K562 (cell line): ENCODE measurements at regions of chr3 and their contacts with region 1.

Region 1: DNA sequence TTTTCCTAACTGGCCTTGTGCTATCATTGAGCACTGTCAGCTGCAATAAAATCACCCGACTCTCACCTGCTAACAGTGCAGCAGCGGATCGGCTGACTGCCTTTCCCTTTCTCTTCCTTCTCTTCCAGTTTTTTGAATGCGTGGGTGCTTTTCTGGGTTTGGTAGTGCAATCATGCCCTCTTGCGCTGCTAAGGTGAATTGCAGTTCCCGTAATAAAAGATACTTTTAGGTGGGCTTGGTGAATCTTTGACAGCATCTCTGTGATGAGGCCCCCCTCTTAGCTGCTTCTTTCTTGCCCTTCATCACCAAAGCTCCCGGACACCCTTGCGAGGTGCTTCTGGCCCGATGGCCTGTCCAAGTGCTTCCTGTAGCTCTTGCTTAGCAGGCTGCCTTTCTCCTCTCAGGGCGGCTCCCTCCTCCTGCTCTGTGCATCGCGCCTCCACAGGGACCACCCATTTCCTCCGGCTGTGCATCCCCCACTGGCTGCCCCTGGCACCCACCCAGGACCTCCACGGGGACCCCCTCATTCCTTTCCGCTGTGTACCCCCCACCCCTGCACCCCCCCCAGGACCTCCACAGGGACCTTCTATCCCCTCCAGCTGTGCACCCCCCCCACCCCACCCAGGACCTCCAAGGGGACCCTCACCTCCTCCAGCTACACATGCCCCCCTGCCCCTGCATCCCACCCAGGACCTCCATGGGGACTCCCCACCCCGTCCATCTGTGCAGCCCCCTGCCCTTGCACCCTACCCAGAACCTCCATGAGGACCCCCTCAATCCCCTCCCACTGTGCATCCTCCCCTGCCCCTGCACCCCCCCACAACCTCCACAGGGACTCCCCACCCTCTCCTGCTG is 50.8 kb upstream of the RPL32 start:
- DNase-seq: peak; percentile 70 to 81 (median 73)
- ATAC-seq: peak; percentile 60
- H3K4me3 ChIP-seq: no peak overlapping the region
- H3K27ac ChIP-seq: no peak overlapping the region
- H3K4me1 ChIP-seq: peaks cover 9 to 20% of the 10 kb centered on the region in 2 experiments; a peak in 3 of 5 replicates
- H3K27me3 ChIP-seq: no peaks in the 10 kb centered on the region
- CTCF ChIP-seq: peak; percentile 94 to 98 (median 98)
- EP300 ChIP-seq: no peak
- POLR2A ChIP-seq: no peak
- RAD21 ChIP-seq: peak; percentile 98 to 99

Region 2: DNA sequence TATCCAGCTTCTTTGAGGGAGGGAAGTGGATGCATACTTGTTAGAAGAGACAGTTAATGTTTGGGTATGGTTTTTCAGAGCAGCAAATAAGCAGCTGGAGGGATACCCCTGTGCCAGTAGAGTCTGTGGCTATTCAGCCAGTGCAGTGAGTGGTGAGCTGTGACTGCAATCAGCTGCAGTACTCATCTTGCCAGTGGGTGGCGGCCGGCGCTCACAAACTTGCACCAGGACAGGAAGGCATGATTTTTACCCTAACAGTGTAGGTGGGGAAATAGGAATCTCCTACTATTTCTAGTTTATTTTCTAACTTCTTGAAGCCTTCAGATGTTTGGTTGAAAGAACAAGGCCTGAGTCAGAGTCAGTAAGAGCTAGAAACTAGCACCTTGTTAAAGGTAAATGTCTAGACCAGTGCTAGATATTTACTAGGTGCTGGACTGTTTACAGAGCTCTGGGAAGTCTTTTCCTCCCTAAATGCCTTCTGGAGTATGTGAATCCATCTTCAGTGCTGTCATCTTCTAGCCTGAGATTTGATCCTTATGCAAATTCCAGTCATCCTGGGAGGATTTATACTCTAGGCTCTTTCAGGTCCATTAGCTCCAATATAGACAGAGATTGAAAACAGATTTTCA is 757.1 kb before region 1 on chr3:
- CTCF ChIA-PET with region 1: interaction called, 8 read pairs
- POLR2A ChIA-PET with region 1: no interaction called
- in situ Hi-C with region 1: loop called (anchors 25 kb)
- intact Hi-C with region 1: loop called (anchors 1 kb)
- DNase-seq: peak; percentile 57 to 63 (median 60)
- ATAC-seq: peak; percentile 97
- H3K4me3 ChIP-seq: no peak overlapping the region
- H3K27ac ChIP-seq: no peak overlapping the region
- H3K4me1 ChIP-seq: no peaks in the 10 kb centered on the region
- H3K27me3 ChIP-seq: no peaks in the 10 kb centered on the region
- CTCF ChIP-seq: peak; percentile 84 to 90 (median 88)
- EP300 ChIP-seq: no peak
- POLR2A ChIP-seq: no peak
- RAD21 ChIP-seq: peak; percentile 88 to 95

Region 3: DNA sequence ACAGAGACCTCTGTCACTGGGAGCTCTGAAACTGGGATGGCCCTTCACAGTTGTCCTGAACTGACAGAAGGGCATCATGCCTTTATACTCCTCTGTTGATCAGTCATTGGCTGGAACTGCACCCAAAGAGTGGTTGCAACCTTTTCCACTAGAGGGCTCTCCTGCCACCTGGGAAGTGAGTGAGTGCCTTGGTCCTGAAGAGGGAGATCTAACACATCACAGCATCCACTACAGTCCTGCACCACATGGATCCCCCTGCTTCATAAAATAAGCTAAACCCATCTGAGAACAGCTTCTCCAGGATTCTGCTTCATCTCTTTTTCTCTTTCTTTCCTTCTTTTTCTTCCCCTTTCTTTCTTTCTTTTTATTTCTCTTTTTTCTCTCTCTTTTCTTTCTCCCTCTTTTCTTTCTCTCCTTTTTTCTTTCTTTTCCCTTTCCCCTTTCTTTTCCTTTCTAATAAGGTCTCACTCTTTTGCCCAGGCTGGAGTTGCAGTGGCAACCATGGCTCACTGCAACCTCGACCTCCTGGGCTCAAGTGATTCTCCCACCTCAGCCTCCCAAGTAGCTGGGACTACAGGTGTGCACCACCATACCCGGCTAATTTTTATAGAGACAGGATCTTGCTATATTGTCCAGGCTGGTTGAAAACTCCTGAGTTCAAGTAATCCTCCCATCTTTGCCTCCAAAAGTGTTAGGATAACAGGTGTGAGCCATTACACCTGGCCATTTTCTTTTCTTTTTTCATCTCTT is 185.5 kb before region 1 on chr3:
- CTCF ChIA-PET with region 1: interaction called, 12 read pairs
- POLR2A ChIA-PET with region 1: no interaction called
- in situ Hi-C with region 1: loop called (anchors 5 kb)
- intact Hi-C with region 1: loop called (anchors 1 kb)
- DNase-seq: peak; percentile 73 to 87 (median 80)
- ATAC-seq: peak; percentile 99
- H3K4me3 ChIP-seq: no peak overlapping the region
- H3K27ac ChIP-seq: no peak overlapping the region
- H3K4me1 ChIP-seq: no peaks in the 10 kb centered on the region
- H3K27me3 ChIP-seq: peaks cover 14 to 33% of the 10 kb centered on the region in 2 experiments
- CTCF ChIP-seq: peak; percentile 95 to 99 (median 99)
- EP300 ChIP-seq: no peak
- POLR2A ChIP-seq: no peak
- RAD21 ChIP-seq: peak; percentile 73 to 95

Region 4: GRCh38 chr3:12822725-12823373 is 69.4 kb before region 1 on chr3:
- CTCF ChIA-PET with region 1: interaction called, 4 read pairs
- POLR2A ChIA-PET with region 1: no interaction called
- in situ Hi-C with region 1: no loop called
- intact Hi-C with region 1: loop called (anchors 1 kb)
- DNase-seq: peak in 3 of 4 experiments; percentile 49 to 64 (median 49)
- ATAC-seq: peak; percentile 83
- H3K4me3 ChIP-seq: no peak overlapping the region
- H3K27ac ChIP-seq: no peak overlapping the region; the same call in 2 of the 3 replicates
- H3K4me1 ChIP-seq: peaks cover 0 to 2% of the 10 kb centered on the region in 2 experiments; a peak in 1 of 5 replicates
- H3K27me3 ChIP-seq: no peaks in the 10 kb centered on the region
- CTCF ChIP-seq: peak; percentile 52 to 74 (median 57); a peak in 4 of 6 replicates
- EP300 ChIP-seq: no peak
- POLR2A ChIP-seq: no peak
- RAD21 ChIP-seq: peak in 1 of 2 experiments; percentile 44; a peak in 3 of 4 replicates

Region 5: GRCh38 chr3:12868039-12869034 is 23.9 kb before region 1 on chr3:
- CTCF ChIA-PET with region 1: interaction called, 42 read pairs
- POLR2A ChIA-PET with region 1: interaction called, 5 read pairs
- in situ Hi-C with region 1: no loop called
- intact Hi-C with region 1: loop called (anchors 1 kb)
- DNase-seq: peak; percentile 85 to 97 (median 86)
- ATAC-seq: peak; percentile 89
- H3K4me3 ChIP-seq: peak overlapping the region; percentile 47
- H3K27ac ChIP-seq: peak overlapping the region; percentile 79
- H3K4me1 ChIP-seq: peaks cover 8 to 22% of the 10 kb centered on the region in 2 experiments
- H3K27me3 ChIP-seq: no peaks in the 10 kb centered on the region
- CTCF ChIP-seq: peak; percentile 92 to 98 (median 96)
- EP300 ChIP-seq: peak; percentile 45
- POLR2A ChIP-seq: peak; percentile 69
- RAD21 ChIP-seq: peak; percentile 98 to 99

Region 6: DNA sequence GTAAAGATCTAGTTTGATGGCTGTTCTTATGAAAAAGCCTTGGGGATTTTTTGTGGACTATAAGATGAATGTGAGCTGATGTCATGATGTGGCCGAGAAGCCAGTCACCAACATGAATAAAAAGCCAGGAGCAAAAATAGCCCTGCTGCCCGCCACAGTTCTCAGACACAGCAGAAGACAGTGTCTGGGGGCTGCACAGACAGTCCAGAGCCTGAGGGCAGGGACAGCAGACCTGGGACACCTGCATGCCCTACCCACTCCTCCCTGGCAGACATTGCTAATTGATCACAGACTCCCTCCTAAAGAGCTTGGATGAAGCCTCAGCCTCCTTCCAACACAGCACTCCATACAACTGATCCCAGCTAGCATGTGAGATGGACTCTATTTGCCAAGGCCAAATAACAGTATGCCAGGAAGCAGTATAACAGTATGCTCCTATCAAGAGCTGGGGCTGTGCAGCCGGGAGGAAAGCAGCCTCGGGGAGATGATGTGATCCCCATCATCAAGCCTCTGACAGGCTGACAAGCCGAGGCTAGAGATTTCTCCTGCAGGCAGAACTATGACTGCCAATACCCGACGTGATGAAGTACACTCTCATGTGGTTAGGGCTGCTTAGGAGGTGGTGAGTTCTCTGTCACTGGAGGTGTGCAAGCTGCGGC is 54.6 kb after region 1 on chr3:
- CTCF ChIA-PET with region 1: no interaction called
- POLR2A ChIA-PET with region 1: no interaction called
- in situ Hi-C with region 1: no loop called
- intact Hi-C with region 1: no loop called
- DNase-seq: peak in 1 of 4 experiments; percentile 47
- ATAC-seq: peak; percentile 58
- H3K4me3 ChIP-seq: no peak overlapping the region
- H3K27ac ChIP-seq: no peak overlapping the region; the same call in 1 of the 3 replicates
- H3K4me1 ChIP-seq: peaks cover 39 to 72% of the 10 kb centered on the region in 2 experiments; a peak in 4 of 5 replicates
- H3K27me3 ChIP-seq: no peaks in the 10 kb centered on the region
- CTCF ChIP-seq: no peak
- EP300 ChIP-seq: no peak
- POLR2A ChIP-seq: no peak
- RAD21 ChIP-seq: no peak

Region 7: GRCh38 chr3:13088028-13089006 is 196.1 kb after region 1 on chr3:
- CTCF ChIA-PET with region 1: no interaction called
- POLR2A ChIA-PET with region 1: no interaction called
- in situ Hi-C with region 1: no loop called
- intact Hi-C with region 1: no loop called
- DNase-seq: no peak
- ATAC-seq: no peak
- H3K4me3 ChIP-seq: no peak overlapping the region
- H3K27ac ChIP-seq: no peak overlapping the region
- H3K4me1 ChIP-seq: peaks cover 8 to 29% of the 10 kb centered on the region in 2 experiments; a peak in 4 of 5 replicates
- H3K27me3 ChIP-seq: peaks cover 0 to 11% of the 10 kb centered on the region in 2 experiments; a peak in 2 of 5 replicates
- CTCF ChIP-seq: no peak
- EP300 ChIP-seq: no peak
- POLR2A ChIP-seq: no peak
- RAD21 ChIP-seq: no peak